ENCODE measurements at regions of chr1 and their contacts with region 1.

Region 1: GRCh38 chr1:89454845-89455521 is 69.6 kb upstream of the LRRC8B start:
- DNase-seq: peak; percentile 77
- ATAC-seq: peak; percentile 43
- H3K4me3 Mint-ChIP-seq: no peak overlapping the region
- H3K27ac Mint-ChIP-seq: no peak overlapping the region
- H3K4me1 Mint-ChIP-seq: peaks cover 27% of the 10 kb centered on the region
- H3K27me3 Mint-ChIP-seq: peaks cover 26% of the 10 kb centered on the region

Region 2: DNA sequence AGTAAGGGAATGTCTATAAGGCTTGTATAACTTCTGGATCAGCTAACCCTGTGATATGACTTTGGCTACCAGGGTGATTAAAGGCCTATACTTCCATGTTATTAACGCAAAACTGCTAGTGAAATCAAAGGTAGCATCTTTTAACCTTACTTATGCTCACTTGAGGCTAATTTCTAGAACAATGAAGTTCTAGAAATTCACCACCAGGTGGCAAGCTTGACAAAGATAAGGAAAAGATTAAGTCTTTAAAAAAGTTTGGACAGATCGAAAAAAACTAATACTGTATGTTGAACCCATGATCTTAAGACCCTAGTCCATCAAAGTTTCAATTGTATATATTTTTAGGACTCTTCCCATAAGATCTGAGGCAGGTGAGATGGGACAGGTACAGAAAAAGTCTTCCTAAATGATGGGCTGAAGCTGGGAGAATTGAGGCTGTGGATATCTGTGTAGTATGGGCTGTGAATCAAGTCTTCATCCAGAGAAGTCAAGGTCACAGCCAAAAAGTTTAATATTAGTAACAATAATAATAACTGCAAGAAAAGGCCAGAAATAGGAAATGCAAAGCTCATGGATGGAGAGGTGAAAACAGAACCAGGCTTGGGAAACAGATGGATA is 481.4 kb before region 1 on chr1:
- CTCF ChIA-PET with region 1: interaction called, 9 read pairs
- POLR2A ChIA-PET with region 1: no interaction called
- intact Hi-C with region 1: loop called in 1 of 2 experiments (anchors 1 kb)
- DNase-seq: no peak
- ATAC-seq: peak; percentile 20
- H3K4me3 Mint-ChIP-seq: no peak overlapping the region
- H3K27ac Mint-ChIP-seq: no peak overlapping the region
- H3K4me1 Mint-ChIP-seq: peaks cover 37% of the 10 kb centered on the region
- H3K27me3 Mint-ChIP-seq: no peaks in the 10 kb centered on the region

Region 3: GRCh38 chr1:89041119-89041641 is 413.8 kb before region 1 on chr1:
- CTCF ChIA-PET with region 1: no interaction called
- POLR2A ChIA-PET with region 1: no interaction called
- intact Hi-C with region 1: loop called (anchors 1 kb)
- DNase-seq: peak; percentile 51
- ATAC-seq: peak; percentile 90
- H3K4me3 Mint-ChIP-seq: peak overlapping the region; percentile 2
- H3K27ac Mint-ChIP-seq: peak overlapping the region; percentile 11
- H3K4me1 Mint-ChIP-seq: peaks cover 33% of the 10 kb centered on the region
- H3K27me3 Mint-ChIP-seq: peaks cover 14% of the 10 kb centered on the region

Region 4: GRCh38 chr1:89198491-89199072 is 256.4 kb before region 1 on chr1 and contains the start of gene GBP4:
- CTCF ChIA-PET with region 1: interaction called, 8 read pairs
- POLR2A ChIA-PET with region 1: no interaction called
- intact Hi-C with region 1: loop called (anchors 2 kb)
- DNase-seq: peak; percentile 63
- ATAC-seq: peak; percentile 67
- H3K4me3 Mint-ChIP-seq: peak within 1 kb of the TSS; percentile 83
- H3K27ac Mint-ChIP-seq: peak within 1 kb of the TSS; percentile 98
- H3K4me1 Mint-ChIP-seq: peaks cover 73% of the 10 kb centered on the region
- H3K27me3 Mint-ChIP-seq: no peaks in the 10 kb centered on the region
- total RNA-seq, gene GBP4: 30.8 to 34.4 TPM

Region 5: GRCh38 chr1:89358287-89358893 is 96.6 kb before region 1 on chr1:
- CTCF ChIA-PET with region 1: interaction called, 8 read pairs
- POLR2A ChIA-PET with region 1: no interaction called
- intact Hi-C with region 1: loop called (anchors 1 kb)
- DNase-seq: peak; percentile 90
- ATAC-seq: peak; percentile 73
- H3K4me3 Mint-ChIP-seq: peak overlapping the region; percentile 55
- H3K27ac Mint-ChIP-seq: peak overlapping the region; percentile 84
- H3K4me1 Mint-ChIP-seq: peaks cover 46% of the 10 kb centered on the region
- H3K27me3 Mint-ChIP-seq: no peaks in the 10 kb centered on the region

Region 6: DNA sequence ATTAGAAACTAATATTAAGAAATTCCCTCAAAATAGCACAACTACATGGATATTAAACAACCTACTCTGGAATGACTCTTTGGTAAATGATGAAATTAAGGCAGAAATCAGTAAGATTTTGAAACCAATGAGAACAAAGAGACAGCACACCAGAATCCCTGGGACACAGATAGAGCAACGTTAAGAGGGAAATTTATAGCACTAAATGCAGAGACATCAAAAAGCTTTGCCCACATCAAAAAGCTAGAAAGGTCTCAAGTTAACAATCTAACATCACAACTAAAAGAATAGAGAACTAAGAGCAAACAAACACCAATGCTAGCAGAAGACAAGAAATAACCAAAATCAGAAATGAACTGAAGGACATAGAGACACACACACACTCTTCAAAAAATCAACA is 21.1 kb after region 1 on chr1:
- CTCF ChIA-PET with region 1: no interaction called
- POLR2A ChIA-PET with region 1: no interaction called
- intact Hi-C with region 1: no loop called
- DNase-seq: no peak
- ATAC-seq: no peak
- H3K4me3 Mint-ChIP-seq: no peak overlapping the region
- H3K27ac Mint-ChIP-seq: no peak overlapping the region
- H3K4me1 Mint-ChIP-seq: peaks cover 2% of the 10 kb centered on the region
- H3K27me3 Mint-ChIP-seq: peaks cover 2% of the 10 kb centered on the region